AG04450 (cell line): ENCODE measurements at regions of chr15 and their contacts with region 1.

Region 1: DNA sequence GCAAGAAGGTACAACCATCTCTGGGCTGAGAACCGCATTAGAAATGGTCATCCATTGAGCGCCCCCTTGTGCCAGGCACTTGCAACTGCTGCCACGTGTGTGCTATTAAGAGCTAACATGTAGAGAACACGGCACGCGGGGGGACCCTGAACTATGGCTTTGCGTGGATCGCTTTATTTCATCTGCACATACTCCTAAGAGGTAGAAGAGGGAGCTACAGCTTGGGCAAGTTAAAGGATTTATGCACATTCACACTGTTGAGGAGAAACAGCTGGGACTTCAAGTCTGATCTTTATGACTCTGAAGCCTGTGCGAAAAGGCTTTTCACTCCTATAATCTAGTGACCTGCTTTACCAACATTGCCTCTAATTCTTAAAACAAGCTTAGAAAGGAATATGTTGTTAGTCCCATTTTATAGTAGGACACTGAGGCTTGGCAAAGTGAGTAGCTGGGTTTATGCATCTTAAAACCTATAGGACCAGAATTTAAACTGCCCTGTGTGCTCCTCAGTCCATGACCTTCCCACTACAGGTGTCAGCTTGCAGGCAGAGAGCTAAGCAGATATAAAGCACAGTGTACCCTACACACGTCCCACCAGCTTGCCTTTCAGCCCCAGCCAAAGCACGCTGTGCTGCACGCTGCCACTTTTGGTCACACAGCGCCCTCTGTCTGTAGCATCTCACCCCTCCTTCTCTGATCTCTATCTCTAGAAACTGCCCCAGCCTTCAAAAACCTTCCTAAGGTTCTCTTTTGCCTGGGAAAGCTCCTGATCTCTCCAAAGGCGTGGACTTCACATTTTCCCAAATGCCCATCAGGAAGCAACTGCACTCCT is 57.8 kb downstream of the STARD5 start:
- DNase-seq: peak; percentile 61
- H3K4me3 ChIP-seq: no peak overlapping the region
- H3K27ac ChIP-seq: no peak overlapping the region
- H3K27me3 ChIP-seq: peaks cover 2% of the 10 kb centered on the region
- CTCF ChIP-seq: peak; percentile 95

Region 2: GRCh38 chr15:80906159-80906766 is 359.9 kb before region 1 on chr15:
- CTCF ChIA-PET with region 1: no interaction called
- POLR2A ChIA-PET with region 1: no interaction called
- DNase-seq: no peak
- H3K4me3 ChIP-seq: no peak overlapping the region
- H3K27ac ChIP-seq: peak overlapping the region; percentile 21
- H3K27me3 ChIP-seq: no peaks in the 10 kb centered on the region
- CTCF ChIP-seq: no peak

Region 3: GRCh38 chr15:80970018-80970658 is 296.0 kb before region 1 on chr15:
- CTCF ChIA-PET with region 1: interaction called, 45 read pairs
- POLR2A ChIA-PET with region 1: no interaction called
- DNase-seq: no peak
- H3K4me3 ChIP-seq: no peak overlapping the region
- H3K27ac ChIP-seq: no peak overlapping the region
- H3K27me3 ChIP-seq: no peaks in the 10 kb centered on the region
- CTCF ChIP-seq: peak; percentile 79

Region 4: GRCh38 chr15:81091889-81092558 is 174.1 kb before region 1 on chr15:
- CTCF ChIA-PET with region 1: interaction called, 14 read pairs
- POLR2A ChIA-PET with region 1: no interaction called
- DNase-seq: peak; percentile 89
- H3K4me3 ChIP-seq: peak overlapping the region; percentile 12
- H3K27ac ChIP-seq: peak overlapping the region; percentile 80
- H3K27me3 ChIP-seq: peaks cover 7% of the 10 kb centered on the region
- CTCF ChIP-seq: 0 out of 2 replicates have a peak, but pooled peaks have one; percentile 4

Region 5: DNA sequence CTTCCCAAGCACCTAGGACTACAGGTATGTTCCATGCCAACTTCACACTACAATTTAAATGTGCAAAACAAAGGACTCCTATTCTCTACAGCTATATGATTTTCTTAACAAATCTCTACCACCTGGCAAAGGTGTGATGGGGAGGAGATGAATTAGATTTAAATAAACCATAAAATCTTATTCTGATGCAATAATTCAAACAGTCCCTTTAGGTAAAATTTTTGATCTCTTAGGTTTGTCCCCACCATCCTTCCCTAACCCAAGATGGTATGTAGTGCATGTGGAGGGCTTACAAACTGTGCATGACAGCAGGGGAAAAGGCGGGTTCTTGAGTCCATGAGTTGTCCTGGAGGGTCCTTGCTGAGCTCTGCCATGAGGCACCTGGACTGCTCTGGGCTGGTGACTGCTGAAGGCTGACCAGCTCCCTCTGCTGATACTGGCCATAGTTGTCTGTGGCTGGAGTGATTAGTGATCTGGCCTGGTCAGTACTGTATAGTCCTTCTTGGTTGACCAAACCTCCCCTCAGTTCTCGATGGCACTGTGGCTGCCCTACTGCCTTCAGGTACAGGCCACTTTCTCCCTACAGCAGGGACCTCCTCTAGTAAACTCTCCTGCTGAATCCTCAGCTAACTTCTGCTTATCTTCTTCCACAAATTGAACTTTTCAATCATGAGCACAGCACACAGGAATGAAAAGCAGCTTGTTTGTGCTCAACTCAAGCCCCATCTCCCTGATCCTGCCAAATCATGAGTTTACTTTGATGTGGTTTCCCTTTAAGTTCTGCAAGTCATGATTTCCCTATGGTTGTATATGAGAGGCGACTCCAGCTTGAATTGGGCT is 102.0 kb before region 1 on chr15:
- CTCF ChIA-PET with region 1: interaction called, 66 read pairs
- POLR2A ChIA-PET with region 1: no interaction called
- DNase-seq: peak; percentile 90
- H3K4me3 ChIP-seq: no peak overlapping the region
- H3K27ac ChIP-seq: peak overlapping the region; percentile 96
- H3K27me3 ChIP-seq: no peaks in the 10 kb centered on the region
- CTCF ChIP-seq: peak; percentile 41

Region 6: GRCh38 chr15:81216422-81216821 is 49.7 kb before region 1 on chr15:
- CTCF ChIA-PET with region 1: interaction called, 27 read pairs
- POLR2A ChIA-PET with region 1: no interaction called
- DNase-seq: no peak
- H3K4me3 ChIP-seq: no peak overlapping the region
- H3K27ac ChIP-seq: no peak overlapping the region
- H3K27me3 ChIP-seq: no peaks in the 10 kb centered on the region
- CTCF ChIP-seq: no peak

Region 7: GRCh38 chr15:81291916-81292522 is 25.9 kb after region 1 on chr15:
- CTCF ChIA-PET with region 1: interaction called, 14 read pairs
- POLR2A ChIA-PET with region 1: no interaction called
- DNase-seq: no peak
- H3K4me3 ChIP-seq: no peak overlapping the region
- H3K27ac ChIP-seq: no peak overlapping the region
- H3K27me3 ChIP-seq: no peaks in the 10 kb centered on the region
- CTCF ChIP-seq: no peak

Region 8: GRCh38 chr15:81363718-81364500 is 97.7 kb after region 1 on chr15:
- CTCF ChIA-PET with region 1: no interaction called
- POLR2A ChIA-PET with region 1: no interaction called
- DNase-seq: no peak
- H3K4me3 ChIP-seq: no peak overlapping the region
- H3K27ac ChIP-seq: no peak overlapping the region
- H3K27me3 ChIP-seq: no peaks in the 10 kb centered on the region
- CTCF ChIP-seq: no peak

Region 9: GRCh38 chr15:81400640-81401236 is 134.6 kb after region 1 on chr15:
- CTCF ChIA-PET with region 1: interaction called, 163 read pairs
- POLR2A ChIA-PET with region 1: no interaction called
- DNase-seq: peak; percentile 27
- H3K4me3 ChIP-seq: no peak overlapping the region
- H3K27ac ChIP-seq: no peak overlapping the region
- H3K27me3 ChIP-seq: peaks cover 2% of the 10 kb centered on the region
- CTCF ChIP-seq: peak; percentile 86

Region 10: GRCh38 chr15:81492331-81492963 is 226.3 kb after region 1 on chr15:
- CTCF ChIA-PET with region 1: no interaction called
- POLR2A ChIA-PET with region 1: no interaction called
- DNase-seq: no peak
- H3K4me3 ChIP-seq: no peak overlapping the region
- H3K27ac ChIP-seq: no peak overlapping the region
- H3K27me3 ChIP-seq: no peaks in the 10 kb centered on the region
- CTCF ChIP-seq: no peak

Region 11: GRCh38 chr15:81523867-81524266 is 257.7 kb after region 1 on chr15:
- CTCF ChIA-PET with region 1: no interaction called
- POLR2A ChIA-PET with region 1: no interaction called
- DNase-seq: no peak
- H3K4me3 ChIP-seq: no peak overlapping the region
- H3K27ac ChIP-seq: no peak overlapping the region
- H3K27me3 ChIP-seq: no peaks in the 10 kb centered on the region
- CTCF ChIP-seq: no peak